A549 (cell line): ENCODE measurements at regions of chr15 and their contacts with region 1.

Region 1: DNA sequence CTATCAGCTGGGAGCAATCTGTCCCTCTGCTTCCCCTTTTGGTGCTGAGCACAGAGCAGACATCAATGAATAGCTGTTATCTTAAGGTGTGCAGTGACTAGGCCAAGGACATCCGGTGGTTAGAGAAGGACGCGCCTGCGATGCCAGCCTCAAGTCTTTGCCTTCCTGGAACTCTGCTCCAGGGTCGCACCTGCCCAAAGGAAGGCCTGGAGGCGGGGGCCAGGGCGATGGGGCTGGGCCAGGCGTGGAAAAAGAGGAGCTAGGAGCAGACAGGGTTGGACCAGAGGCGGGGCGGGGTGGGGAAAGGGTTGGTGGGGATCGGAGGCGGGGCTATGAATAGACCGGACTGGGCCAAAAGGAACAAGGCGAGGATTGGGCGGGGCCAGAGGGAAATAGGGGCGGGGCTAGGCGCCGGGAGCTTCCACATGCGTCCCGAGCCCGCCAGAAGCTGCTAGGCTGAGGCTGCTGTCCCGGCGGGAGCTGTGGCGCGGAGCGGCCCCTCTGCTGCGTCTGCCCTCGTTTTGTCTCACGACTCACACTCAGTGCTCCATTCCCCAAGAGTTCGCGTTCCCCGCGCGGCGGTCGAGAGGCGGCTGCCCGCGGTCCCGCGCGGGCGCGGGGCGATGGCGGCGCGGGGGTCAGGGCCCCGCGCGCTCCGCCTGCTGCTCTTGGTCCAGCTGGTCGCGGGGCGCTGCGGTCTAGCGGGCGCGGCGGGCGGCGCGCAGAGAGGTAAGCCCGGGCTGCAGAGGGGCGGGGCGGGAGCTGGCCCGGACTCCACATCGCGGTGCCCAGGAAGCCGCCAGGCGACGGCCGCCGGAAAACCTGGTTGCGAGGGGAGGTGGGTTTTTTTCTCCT is at the start of gene CHRNA5:
- DNase-seq: peak; percentile 92 to 94
- ATAC-seq: peak; percentile 91 to 96
- H3K4me3 ChIP-seq: peak within 1 kb of the TSS; percentile 73
- H3K27ac ChIP-seq: peak within 1 kb of the TSS; percentile 85 to 94
- H3K4me1 ChIP-seq: peaks cover 10% of the 10 kb centered on the region
- CTCF ChIP-seq: peak; percentile 18; the same call in 2 of the 3 replicates
- EP300 ChIP-seq: no peak
- POLR2A ChIP-seq: peak; percentile 99
- RAD21 ChIP-seq: no peak; a peak in 1 of 5 replicates
- polyA plus RNA-seq, gene CHRNA5: 40.9 and 49.6 TPM in 2 replicates

Region 2: GRCh38 chr15:78437762-78438302 is 127.5 kb before region 1 on chr15 and contains the start of gene IREB2:
- CTCF ChIA-PET with region 1: no interaction called
- POLR2A ChIA-PET with region 1: interaction called, 13 read pairs
- DNase-seq: peak; percentile 99
- ATAC-seq: peak; percentile 93 to 96
- H3K4me3 ChIP-seq: peak within 1 kb of the TSS; percentile 97
- H3K27ac ChIP-seq: peak within 1 kb of the TSS; percentile 93 to 98
- H3K4me1 ChIP-seq: peaks cover 27% of the 10 kb centered on the region
- CTCF ChIP-seq: no peak
- EP300 ChIP-seq: no peak
- POLR2A ChIP-seq: peak; percentile 64
- RAD21 ChIP-seq: no peak
- polyA plus RNA-seq, gene IREB2: 71.0 and 78.1 TPM in 2 replicates

Region 3: GRCh38 chr15:78552597-78552996 is 12.7 kb before region 1 on chr15:
- CTCF ChIA-PET with region 1: interaction called, 15 read pairs
- POLR2A ChIA-PET with region 1: interaction called, 24 read pairs
- DNase-seq: no peak
- ATAC-seq: peak; percentile 44 to 48; a peak in 4 of 6 replicates
- H3K4me3 ChIP-seq: no peak overlapping the region
- H3K27ac ChIP-seq: no peak overlapping the region
- H3K4me1 ChIP-seq: no peaks in the 10 kb centered on the region
- CTCF ChIP-seq: no peak
- EP300 ChIP-seq: no peak
- POLR2A ChIP-seq: no peak
- RAD21 ChIP-seq: no peak

Region 4: GRCh38 chr15:78599189-78599588 is 33.9 kb after region 1 on chr15:
- CTCF ChIA-PET with region 1: no interaction called
- POLR2A ChIA-PET with region 1: no interaction called
- DNase-seq: no peak
- ATAC-seq: no peak
- H3K4me3 ChIP-seq: no peak overlapping the region
- H3K27ac ChIP-seq: no peak overlapping the region
- H3K4me1 ChIP-seq: no peaks in the 10 kb centered on the region
- CTCF ChIP-seq: no peak
- EP300 ChIP-seq: no peak
- POLR2A ChIP-seq: no peak
- RAD21 ChIP-seq: no peak

Region 5: DNA sequence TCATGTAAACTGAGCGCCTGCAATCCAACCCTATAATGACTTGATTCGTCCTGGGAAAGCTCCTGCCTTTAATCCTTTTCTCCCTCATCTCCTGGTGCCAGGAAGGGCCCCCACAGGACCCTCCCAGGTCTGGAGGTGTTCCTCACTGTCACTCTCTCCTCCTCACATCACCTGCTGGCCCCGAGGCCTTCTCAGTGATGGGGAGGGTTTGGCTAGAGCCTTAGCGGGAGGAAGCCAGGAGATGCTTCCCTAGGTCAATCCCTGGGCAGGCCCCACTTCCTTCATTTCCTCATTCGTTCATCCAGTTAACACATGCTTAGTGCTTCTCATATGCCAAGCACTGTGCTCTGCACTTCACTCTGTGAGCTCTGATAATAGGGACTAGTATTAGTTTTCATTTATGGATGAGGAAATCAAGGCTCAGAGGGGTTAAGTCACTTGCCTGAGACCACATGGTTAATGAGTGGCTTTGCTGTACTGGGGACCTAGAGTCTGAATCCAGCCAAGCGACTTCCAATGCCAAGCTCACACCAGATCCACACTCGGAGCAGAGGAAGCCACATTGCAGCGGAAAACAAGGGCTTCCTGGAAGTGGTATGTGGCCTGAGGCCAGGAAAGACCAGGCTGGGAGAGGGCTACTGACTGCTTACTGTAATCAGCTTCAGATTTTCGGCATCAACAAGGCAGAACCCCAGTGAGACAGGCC is 126.0 kb after region 1 on chr15:
- CTCF ChIA-PET with region 1: no interaction called
- POLR2A ChIA-PET with region 1: no interaction called
- DNase-seq: no peak
- ATAC-seq: no peak
- H3K4me3 ChIP-seq: no peak overlapping the region
- H3K27ac ChIP-seq: no peak overlapping the region
- H3K4me1 ChIP-seq: no peaks in the 10 kb centered on the region
- CTCF ChIP-seq: no peak
- EP300 ChIP-seq: no peak
- POLR2A ChIP-seq: no peak
- RAD21 ChIP-seq: no peak